ENCODE measurements at regions of chr9 and their contacts with region 1.

Region 1: GRCh38 chr9:113657703-113658544 is 194.4 kb downstream of the RGS3 start:
- DNase-seq: peak; percentile 72
- H3K4me3 ChIP-seq: no peak overlapping the region
- H3K27ac ChIP-seq: no peak overlapping the region
- H3K27me3 ChIP-seq: peaks cover 3% of the 10 kb centered on the region
- CTCF ChIP-seq: peak; percentile 97

Region 2: GRCh38 chr9:113401027-113401792 is 256.7 kb before region 1 on chr9 and contains the start of gene ALAD:
- CTCF ChIA-PET with region 1: interaction called, 55 read pairs
- POLR2A ChIA-PET with region 1: interaction called, 3 read pairs
- DNase-seq: peak; percentile 94
- H3K4me3 ChIP-seq: peak within 1 kb of the TSS; percentile 94
- H3K27ac ChIP-seq: peak within 1 kb of the TSS; percentile 39
- H3K27me3 ChIP-seq: no peaks in the 10 kb centered on the region
- CTCF ChIP-seq: peak; percentile 90
- polyA plus RNA-seq, gene ALAD: 11.8 and 15.9 TPM in 2 replicates

Region 3: GRCh38 chr9:113454914-113455761 is 202.8 kb before region 1 on chr9:
- CTCF ChIA-PET with region 1: interaction called, 22 read pairs
- POLR2A ChIA-PET with region 1: interaction called, 3 read pairs
- DNase-seq: peak; percentile 79
- H3K4me3 ChIP-seq: no peak overlapping the region
- H3K27ac ChIP-seq: peak overlapping the region; percentile 96
- H3K27me3 ChIP-seq: no peaks in the 10 kb centered on the region
- CTCF ChIP-seq: no peak

Region 4: GRCh38 chr9:113591001-113591898 is 66.7 kb before region 1 on chr9:
- CTCF ChIA-PET with region 1: interaction called, 767 read pairs
- POLR2A ChIA-PET with region 1: interaction called, 22 read pairs
- DNase-seq: no peak
- H3K4me3 ChIP-seq: no peak overlapping the region
- H3K27ac ChIP-seq: no peak overlapping the region
- H3K27me3 ChIP-seq: no peaks in the 10 kb centered on the region
- CTCF ChIP-seq: peak; percentile 96

Region 5: DNA sequence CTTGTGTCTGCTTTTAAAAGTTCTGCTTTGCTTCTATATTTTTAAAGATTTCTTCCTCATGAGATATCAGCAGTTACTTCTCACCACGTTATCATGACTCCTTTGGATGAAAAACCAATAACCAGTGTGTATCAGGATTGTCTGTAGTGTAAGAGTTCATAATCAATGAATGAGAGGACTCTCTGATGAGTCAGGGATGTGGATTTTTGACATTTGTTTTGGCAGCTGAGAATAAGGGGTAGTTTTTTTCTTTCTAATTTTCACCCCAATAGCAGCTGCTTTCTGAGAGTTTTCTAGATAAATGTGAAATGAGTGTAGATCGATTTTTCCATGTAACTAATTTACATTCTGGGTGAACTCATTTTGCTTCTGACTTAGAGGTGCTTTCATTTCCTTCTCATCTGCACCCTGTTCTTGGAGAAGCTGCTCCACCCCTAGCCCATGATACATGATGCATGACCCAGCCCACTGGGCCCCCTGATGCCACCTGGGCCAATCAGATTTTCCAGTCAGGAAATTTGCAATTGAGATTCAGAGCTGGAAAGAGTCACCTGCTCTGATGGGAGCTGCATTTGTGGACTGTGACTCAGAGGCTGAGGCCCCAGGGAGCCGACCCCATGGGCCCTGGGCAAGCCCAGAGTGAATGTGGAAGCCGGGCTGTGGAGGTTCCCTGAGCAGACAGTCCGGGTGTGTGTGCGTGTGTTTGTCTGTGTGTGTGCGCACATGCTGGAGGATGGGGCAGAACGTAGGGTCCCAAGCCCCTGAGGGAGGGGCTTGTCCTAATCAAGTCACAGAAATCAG is 35.1 kb before region 1 on chr9:
- CTCF ChIA-PET with region 1: interaction called, 10 read pairs
- POLR2A ChIA-PET with region 1: interaction called, 5 read pairs
- DNase-seq: no peak
- H3K4me3 ChIP-seq: no peak overlapping the region
- H3K27ac ChIP-seq: peak overlapping the region; percentile 71
- H3K27me3 ChIP-seq: no peaks in the 10 kb centered on the region
- CTCF ChIP-seq: no peak

Region 6: GRCh38 chr9:113668061-113668460 is 10.1 kb after region 1 on chr9:
- CTCF ChIA-PET with region 1: interaction called, 23 read pairs
- POLR2A ChIA-PET with region 1: no interaction called
- DNase-seq: no peak
- H3K4me3 ChIP-seq: no peak overlapping the region
- H3K27ac ChIP-seq: no peak overlapping the region
- H3K27me3 ChIP-seq: peaks cover 8% of the 10 kb centered on the region
- CTCF ChIP-seq: no peak

Measured in AG04450 (cell line).